ENCODE measurements at regions of chr10 and their contacts with region 1.

Region 1: DNA sequence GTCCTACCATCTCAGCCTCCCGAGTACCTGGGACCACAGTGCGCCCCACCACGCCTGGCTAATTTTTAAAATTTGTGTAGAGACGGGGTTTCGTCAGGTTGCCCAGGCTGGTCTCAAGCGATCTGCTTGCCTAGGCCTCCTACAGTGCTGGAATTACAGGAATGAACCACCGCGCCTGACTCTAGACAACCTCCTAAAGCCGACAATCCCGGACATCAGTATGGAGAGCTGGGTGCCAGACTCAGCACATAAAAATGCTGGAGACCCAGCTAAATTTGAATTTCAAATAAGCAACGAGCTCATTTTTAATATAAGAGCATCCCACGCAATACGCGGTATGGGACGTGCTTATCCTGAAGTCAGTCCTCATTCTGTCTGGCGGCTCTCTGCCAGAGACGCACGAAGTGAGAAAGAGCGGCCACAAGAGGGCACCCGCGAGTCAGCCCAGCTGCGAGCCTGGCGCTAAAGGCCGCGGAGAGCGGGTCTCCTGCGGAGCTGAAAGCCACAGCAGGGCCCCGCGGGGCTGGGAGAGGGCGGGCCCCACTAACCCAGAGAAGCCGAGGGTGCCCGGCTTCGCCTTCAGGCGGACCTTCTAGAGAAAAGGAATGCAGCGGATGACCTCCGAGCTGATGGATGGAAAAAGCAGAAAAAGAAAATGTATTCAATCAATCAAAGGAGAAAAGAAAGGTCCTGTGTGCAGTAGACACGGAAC is 7.0 kb downstream of the CALY start:
- DNase-seq: no peak
- H3K4me3 ChIP-seq: peak overlapping the region; percentile 24 to 51 (median 44)
- H3K27ac ChIP-seq: no peak overlapping the region
- H3K4me1 ChIP-seq: peaks cover 21 to 35% (median 29%) of the 10 kb centered on the region in 4 donors
- H3K27me3 ChIP-seq: peaks cover 9 to 82% (median 54%) of the 10 kb centered on the region in 4 donors
- CTCF ChIP-seq: peak in 2 of 3 experiments; percentile 76 to 92
- EP300 ChIP-seq: no peak
- POLR2A ChIP-seq: no peak

Region 2: GRCh38 chr10:133373104-133373624 is 43.5 kb after region 1 on chr10 and contains the start of gene ECHS1:
- intact Hi-C with region 1: loop called (anchors 5 kb)
- DNase-seq: peak; percentile 97
- H3K4me3 ChIP-seq: peak within 1 kb of the TSS; percentile 76 to 97 (median 80)
- H3K27ac ChIP-seq: peak within 1 kb of the TSS; percentile 86 to 95 (median 91)
- H3K4me1 ChIP-seq: peaks cover 16 to 35% (median 28%) of the 10 kb centered on the region in 4 donors
- H3K27me3 ChIP-seq: no peaks in the 10 kb centered on the region
- CTCF ChIP-seq: no peak
- EP300 ChIP-seq: no peak
- POLR2A ChIP-seq: peak; percentile 26
- total RNA-seq, gene ECHS1: 64.0 to 77.7 (median 73.2) TPM

Region 3: DNA sequence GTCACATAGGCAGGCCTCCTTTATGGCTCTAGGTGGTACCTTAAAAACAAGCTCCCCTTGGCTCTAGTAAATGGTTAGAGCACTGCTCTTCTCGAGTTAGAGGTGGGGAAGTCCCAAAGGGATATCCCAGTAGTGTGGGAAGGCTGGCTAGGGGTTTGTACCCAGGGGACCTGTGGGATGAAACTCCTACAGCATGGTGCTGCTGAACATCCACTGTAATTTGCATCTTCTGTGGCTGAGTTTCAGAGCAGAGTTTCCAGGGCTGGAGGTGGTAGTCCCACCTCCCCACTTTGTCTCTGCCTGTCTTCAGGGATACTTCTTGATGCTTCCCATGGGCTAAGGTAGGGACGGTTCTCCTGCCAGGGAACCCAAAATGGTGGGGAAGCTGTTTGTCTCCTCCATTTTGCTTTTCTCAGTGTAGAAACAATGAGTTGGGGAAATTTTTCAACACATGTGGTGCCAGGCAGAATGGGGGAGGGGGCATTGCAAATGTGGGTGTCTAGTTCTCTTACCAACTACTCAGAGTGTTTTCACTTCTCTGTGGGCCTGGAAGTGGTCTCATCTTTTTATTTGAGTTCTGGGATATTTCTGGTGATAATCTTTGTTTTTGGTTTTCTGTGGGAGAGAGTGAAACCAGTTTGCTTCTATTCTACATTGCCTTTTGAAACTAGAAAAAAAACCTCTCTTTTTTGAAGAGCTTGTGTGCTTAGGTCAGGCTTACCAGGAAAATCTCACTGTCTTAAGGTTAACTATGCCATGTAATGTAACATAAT is 160.4 kb after region 1 on chr10:
- intact Hi-C with region 1: loop called (anchors 10 kb)
- DNase-seq: no peak
- H3K4me3 ChIP-seq: no peak overlapping the region
- H3K27ac ChIP-seq: no peak overlapping the region
- H3K4me1 ChIP-seq: no peaks in the 10 kb centered on the region
- H3K27me3 ChIP-seq: no peaks in the 10 kb centered on the region
- CTCF ChIP-seq: no peak
- EP300 ChIP-seq: no peak
- POLR2A ChIP-seq: no peak

Region 4: GRCh38 chr10:133520155-133520738 is 190.6 kb after region 1 on chr10:
- intact Hi-C with region 1: loop called (anchors 5 kb)
- DNase-seq: peak; percentile 92
- H3K4me3 ChIP-seq: peak overlapping the region; percentile 42 to 60 (median 51)
- H3K27ac ChIP-seq: peak overlapping the region in 1 of 4 donors; percentile 30
- H3K4me1 ChIP-seq: peaks cover 0 to 14% (median 11%) of the 10 kb centered on the region in 4 donors
- H3K27me3 ChIP-seq: no peaks in the 10 kb centered on the region
- CTCF ChIP-seq: peak; percentile 84 to 94 (median 86)
- EP300 ChIP-seq: no peak
- POLR2A ChIP-seq: no peak